ENCODE measurements at regions of chr17 and their contacts with region 1.

Region 1: GRCh38 chr17:5419356-5419958 is at the start of gene NUP88:
- DNase-seq: peak; percentile 92 to 99 (median 96)
- ATAC-seq: peak; percentile 87
- H3K4me3 ChIP-seq: peak within 1 kb of the TSS; percentile 93 to 96
- H3K4me3 Mint-ChIP-seq: peak within 1 kb of the TSS; percentile 99
- H3K27ac ChIP-seq: peak within 1 kb of the TSS; percentile 91 to 99
- H3K27ac Mint-ChIP-seq: peak within 1 kb of the TSS; percentile 99
- H3K4me1 ChIP-seq: peaks cover 44% of the 10 kb centered on the region
- H3K4me1 Mint-ChIP-seq: peaks cover 47% of the 10 kb centered on the region
- H3K27me3 ChIP-seq: no peaks in the 10 kb centered on the region
- H3K27me3 Mint-ChIP-seq: no peaks in the 10 kb centered on the region
- CTCF ChIP-seq: no peak
- total RNA-seq, gene NUP88: 149 to 156 TPM

Region 2: GRCh38 chr17:4948931-4949320 is 470.5 kb before region 1 on chr17:
- CTCF ChIA-PET with region 1: no interaction called
- POLR2A ChIA-PET with region 1: no interaction called
- intact Hi-C with region 1: loop called in 1 of 2 experiments (anchors 2 kb)
- DNase-seq: peak; percentile 44 to 90 (median 70)
- ATAC-seq: peak; percentile 26
- H3K4me3 ChIP-seq: peak overlapping the region; percentile 99 to 100
- H3K4me3 Mint-ChIP-seq: peak overlapping the region; percentile 94
- H3K27ac ChIP-seq: peak overlapping the region; percentile 72 to 81
- H3K27ac Mint-ChIP-seq: peak overlapping the region; percentile 93
- H3K4me1 ChIP-seq: peaks cover 38% of the 10 kb centered on the region
- H3K4me1 Mint-ChIP-seq: peaks cover 45% of the 10 kb centered on the region
- H3K27me3 ChIP-seq: no peaks in the 10 kb centered on the region
- H3K27me3 Mint-ChIP-seq: no peaks in the 10 kb centered on the region
- CTCF ChIP-seq: no peak

Region 3: GRCh38 chr17:5281814-5282653 is 137.4 kb before region 1 on chr17 and contains the start of gene RABEP1:
- CTCF ChIA-PET with region 1: interaction called, 3 read pairs
- POLR2A ChIA-PET with region 1: interaction called, 3 read pairs
- intact Hi-C with region 1: loop called in 1 of 2 experiments (anchors 1 kb)
- DNase-seq: peak; percentile 85 to 97 (median 95)
- ATAC-seq: peak; percentile 81
- H3K4me3 ChIP-seq: peak within 1 kb of the TSS; percentile 61 to 63
- H3K4me3 Mint-ChIP-seq: peak within 1 kb of the TSS; percentile 93
- H3K27ac ChIP-seq: peak within 1 kb of the TSS; percentile 60 to 61
- H3K27ac Mint-ChIP-seq: peak within 1 kb of the TSS; percentile 93
- H3K4me1 ChIP-seq: peaks cover 41% of the 10 kb centered on the region
- H3K4me1 Mint-ChIP-seq: peaks cover 38% of the 10 kb centered on the region
- H3K27me3 ChIP-seq: no peaks in the 10 kb centered on the region
- H3K27me3 Mint-ChIP-seq: no peaks in the 10 kb centered on the region
- CTCF ChIP-seq: no peak
- total RNA-seq, gene RABEP1: 27.1 to 27.6 TPM

Region 4: GRCh38 chr17:5438716-5439445 is 19.4 kb after region 1 on chr17 and contains the start of gene C1QBP:
- CTCF ChIA-PET with region 1: interaction called, 8 read pairs
- POLR2A ChIA-PET with region 1: interaction called, 18 read pairs
- intact Hi-C with region 1: loop called (anchors 1 kb)
- DNase-seq: peak; percentile 87 to 96 (median 91)
- ATAC-seq: peak; percentile 92
- H3K4me3 ChIP-seq: peak within 1 kb of the TSS; percentile 56 to 83
- H3K4me3 Mint-ChIP-seq: peak within 1 kb of the TSS; percentile 81
- H3K27ac ChIP-seq: peak within 1 kb of the TSS; percentile 63 to 86
- H3K27ac Mint-ChIP-seq: peak within 1 kb of the TSS; percentile 93
- H3K4me1 ChIP-seq: peaks cover 30% of the 10 kb centered on the region
- H3K4me1 Mint-ChIP-seq: peaks cover 40% of the 10 kb centered on the region
- H3K27me3 ChIP-seq: no peaks in the 10 kb centered on the region
- H3K27me3 Mint-ChIP-seq: no peaks in the 10 kb centered on the region
- CTCF ChIP-seq: peak; percentile 98
- total RNA-seq, gene C1QBP: 72.0 to 79.9 TPM

Region 5: GRCh38 chr17:5468075-5468473 is 48.6 kb after region 1 on chr17:
- CTCF ChIA-PET with region 1: no interaction called
- POLR2A ChIA-PET with region 1: no interaction called
- intact Hi-C with region 1: loop called (anchors 1 kb)
- DNase-seq: peak in 4 of 9 experiments; percentile 9 to 45 (median 18)
- ATAC-seq: peak; percentile 16
- H3K4me3 ChIP-seq: peak overlapping the region; percentile 78 to 84
- H3K4me3 Mint-ChIP-seq: peak overlapping the region; percentile 81
- H3K27ac ChIP-seq: peak overlapping the region; percentile 49 to 53
- H3K27ac Mint-ChIP-seq: peak overlapping the region; percentile 46
- H3K4me1 ChIP-seq: peaks cover 10% of the 10 kb centered on the region
- H3K4me1 Mint-ChIP-seq: peaks cover 31% of the 10 kb centered on the region
- H3K27me3 ChIP-seq: no peaks in the 10 kb centered on the region
- H3K27me3 Mint-ChIP-seq: no peaks in the 10 kb centered on the region
- CTCF ChIP-seq: no peak